ENCODE measurements at regions of chr5 and their contacts with region 1.

Region 1: GRCh38 chr5:39148983-39149534 is 70.3 kb downstream of the FYB1 start:
- DNase-seq: no peak
- H3K4me3 ChIP-seq: no peak overlapping the region
- H3K27me3 ChIP-seq: no peaks in the 10 kb centered on the region
- CTCF ChIP-seq: peak; percentile 34

Region 2: GRCh38 chr5:39283231-39283818 is 134.3 kb after region 1 on chr5:
- CTCF ChIA-PET with region 1: interaction called, 19 read pairs
- POLR2A ChIA-PET with region 1: interaction called, 3 read pairs
- DNase-seq: peak; percentile 4
- H3K4me3 ChIP-seq: no peak overlapping the region
- H3K27me3 ChIP-seq: no peaks in the 10 kb centered on the region
- CTCF ChIP-seq: peak; percentile 75

Region 3: DNA sequence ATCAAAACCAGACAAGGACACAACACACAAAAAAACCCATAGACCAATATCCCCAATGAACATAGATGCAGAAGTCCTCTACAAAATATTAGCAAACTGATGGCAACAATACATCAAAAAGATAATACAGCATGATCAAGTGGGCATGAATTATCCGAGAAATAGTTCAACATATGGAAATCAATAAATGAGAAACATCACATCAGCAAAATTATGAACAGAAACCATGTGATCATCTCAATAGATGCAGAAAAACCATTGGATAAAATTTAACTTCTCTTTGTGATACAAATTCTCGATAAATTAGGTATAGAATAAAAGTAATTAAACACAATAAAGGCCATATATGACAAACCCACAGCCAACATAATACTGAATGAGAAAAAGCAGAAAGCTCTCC is 145.7 kb after region 1 on chr5:
- CTCF ChIA-PET with region 1: no interaction called
- POLR2A ChIA-PET with region 1: no interaction called
- DNase-seq: no peak
- H3K4me3 ChIP-seq: no peak overlapping the region
- H3K27me3 ChIP-seq: no peaks in the 10 kb centered on the region
- CTCF ChIP-seq: no peak